Ovary (tissue), 10 donors: ENCODE measurements at regions of chr2 and their contacts with region 1.

Region 1: GRCh38 chr2:237923481-237924163 is 43.2 kb upstream of the UBE2F start:
- DNase-seq: peak; percentile 80 to 88 (median 84)
- H3K4me3 ChIP-seq: peak overlapping the region; percentile 14
- H3K27ac ChIP-seq: peak overlapping the region; percentile 42 to 60
- H3K4me1 ChIP-seq: peaks cover 6% of the 10 kb centered on the region
- H3K27me3 ChIP-seq: no peaks in the 10 kb centered on the region
- CTCF ChIP-seq: peak; percentile 94 to 96 (median 95)
- EP300 ChIP-seq: no peak
- POLR2A ChIP-seq: no peak

Region 2: GRCh38 chr2:237858294-237859081 is 65.1 kb before region 1 on chr2:
- intact Hi-C with region 1: loop called in 2 of 4 experiments (anchors 5 to 10 kb)
- DNase-seq: peak; percentile 73 to 81 (median 75)
- H3K4me3 ChIP-seq: peak overlapping the region; percentile 85
- H3K27ac ChIP-seq: peak overlapping the region in 1 of 2 donors; percentile 61
- H3K4me1 ChIP-seq: peaks cover 2% of the 10 kb centered on the region
- H3K27me3 ChIP-seq: no peaks in the 10 kb centered on the region
- CTCF ChIP-seq: peak; percentile 60 to 81 (median 80)
- EP300 ChIP-seq: no peak
- POLR2A ChIP-seq: no peak

Region 3: GRCh38 chr2:238263204-238264071 is 339.8 kb after region 1 on chr2:
- intact Hi-C with region 1: loop called in 1 of 4 experiments (anchors 10 kb)
- DNase-seq: peak; percentile 87 to 95 (median 90)
- H3K4me3 ChIP-seq: no peak overlapping the region
- H3K27ac ChIP-seq: peak overlapping the region; percentile 17 to 30
- H3K4me1 ChIP-seq: peaks cover 3% of the 10 kb centered on the region
- H3K27me3 ChIP-seq: no peaks in the 10 kb centered on the region
- CTCF ChIP-seq: peak; percentile 56 to 85 (median 81)
- EP300 ChIP-seq: no peak
- POLR2A ChIP-seq: no peak